ENCODE measurements at regions of chr11 and their contacts with region 1.

Region 1: DNA sequence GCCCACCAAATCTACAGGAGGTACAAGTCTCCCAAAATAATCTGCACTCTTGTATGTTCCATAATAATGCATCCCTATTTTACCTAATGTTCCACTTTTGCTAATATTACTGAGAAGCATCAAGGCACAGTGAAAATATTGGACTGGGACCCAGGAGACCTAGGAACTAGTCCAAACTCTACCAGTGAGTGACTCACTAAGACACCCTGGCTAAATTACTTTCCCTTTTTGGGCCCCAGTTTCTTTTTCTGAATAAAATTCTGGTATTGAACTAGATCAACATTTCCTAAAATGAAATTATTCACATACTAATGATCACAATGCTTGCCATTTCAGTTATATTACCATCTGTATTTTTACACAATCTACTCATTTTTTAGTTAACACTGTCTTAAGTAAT is 19.6 kb downstream of the THAP12 start:
- DNase-seq: no peak
- H3K4me3 ChIP-seq: no peak overlapping the region
- H3K27ac ChIP-seq: no peak overlapping the region
- H3K4me1 ChIP-seq: no peaks in the 10 kb centered on the region
- H3K27me3 ChIP-seq: no peaks in the 10 kb centered on the region
- CTCF ChIP-seq: no peak

Region 2: GRCh38 chr11:75946531-75947530 is 414.5 kb before region 1 on chr11:
- CTCF ChIA-PET with region 1: no interaction called
- dilution Hi-C with region 1: no loop called
- in situ Hi-C with region 1: no loop called
- intact Hi-C with region 1: no loop called
- DNase-seq: peak; percentile 28
- H3K4me3 ChIP-seq: no peak overlapping the region
- H3K27ac ChIP-seq: no peak overlapping the region
- H3K4me1 ChIP-seq: no peaks in the 10 kb centered on the region
- H3K27me3 ChIP-seq: no peaks in the 10 kb centered on the region
- CTCF ChIP-seq: no peak

Region 3: GRCh38 chr11:76408171-76408965 is 47.0 kb after region 1 on chr11:
- CTCF ChIA-PET with region 1: no interaction called
- dilution Hi-C with region 1: no loop called
- in situ Hi-C with region 1: no loop called
- intact Hi-C with region 1: loop called (anchors 2 kb)
- DNase-seq: no peak
- H3K4me3 ChIP-seq: no peak overlapping the region
- H3K27ac ChIP-seq: no peak overlapping the region
- H3K4me1 ChIP-seq: no peaks in the 10 kb centered on the region
- H3K27me3 ChIP-seq: no peaks in the 10 kb centered on the region
- CTCF ChIP-seq: no peak

Measured in mammary epithelial cell (primary cell).